ENCODE measurements at regions of chr5 and their contacts with region 1.

Region 1: GRCh38 chr5:147576646-147577535 is 67.0 kb upstream of the DPYSL3 start:
- DNase-seq: no peak
- ATAC-seq: peak; percentile 84
- H3K4me3 ChIP-seq: no peak overlapping the region
- H3K27ac ChIP-seq: no peak overlapping the region
- H3K4me1 ChIP-seq: no peaks in the 10 kb centered on the region
- H3K27me3 ChIP-seq: no peaks in the 10 kb centered on the region
- CTCF ChIP-seq: peak; percentile 70
- EP300 ChIP-seq: no peak
- POLR2A ChIP-seq: no peak
- RAD21 ChIP-seq: no peak

Region 2: GRCh38 chr5:146533260-146533857 is 1043.5 kb before region 1 on chr5:
- CTCF ChIA-PET with region 1: no interaction called
- POLR2A ChIA-PET with region 1: no interaction called
- in situ Hi-C with region 1: no loop called
- intact Hi-C with region 1: loop called (anchors 10 kb)
- DNase-seq: peak; percentile 66
- ATAC-seq: peak; percentile 97
- H3K4me3 ChIP-seq: no peak overlapping the region
- H3K27ac ChIP-seq: no peak overlapping the region
- H3K4me1 ChIP-seq: no peaks in the 10 kb centered on the region
- H3K27me3 ChIP-seq: no peaks in the 10 kb centered on the region
- CTCF ChIP-seq: peak; percentile 89
- EP300 ChIP-seq: no peak
- POLR2A ChIP-seq: no peak
- RAD21 ChIP-seq: no peak

Region 3: GRCh38 chr5:147223948-147224791 is 352.7 kb before region 1 on chr5:
- CTCF ChIA-PET with region 1: no interaction called
- POLR2A ChIA-PET with region 1: no interaction called
- in situ Hi-C with region 1: loop called (anchors 10 kb)
- intact Hi-C with region 1: loop called (anchors 1 kb)
- DNase-seq: peak; percentile 8
- ATAC-seq: peak; percentile 69
- H3K4me3 ChIP-seq: no peak overlapping the region
- H3K27ac ChIP-seq: no peak overlapping the region
- H3K4me1 ChIP-seq: no peaks in the 10 kb centered on the region
- H3K27me3 ChIP-seq: no peaks in the 10 kb centered on the region
- CTCF ChIP-seq: peak; percentile 43
- EP300 ChIP-seq: no peak
- POLR2A ChIP-seq: no peak
- RAD21 ChIP-seq: no peak

Region 4: DNA sequence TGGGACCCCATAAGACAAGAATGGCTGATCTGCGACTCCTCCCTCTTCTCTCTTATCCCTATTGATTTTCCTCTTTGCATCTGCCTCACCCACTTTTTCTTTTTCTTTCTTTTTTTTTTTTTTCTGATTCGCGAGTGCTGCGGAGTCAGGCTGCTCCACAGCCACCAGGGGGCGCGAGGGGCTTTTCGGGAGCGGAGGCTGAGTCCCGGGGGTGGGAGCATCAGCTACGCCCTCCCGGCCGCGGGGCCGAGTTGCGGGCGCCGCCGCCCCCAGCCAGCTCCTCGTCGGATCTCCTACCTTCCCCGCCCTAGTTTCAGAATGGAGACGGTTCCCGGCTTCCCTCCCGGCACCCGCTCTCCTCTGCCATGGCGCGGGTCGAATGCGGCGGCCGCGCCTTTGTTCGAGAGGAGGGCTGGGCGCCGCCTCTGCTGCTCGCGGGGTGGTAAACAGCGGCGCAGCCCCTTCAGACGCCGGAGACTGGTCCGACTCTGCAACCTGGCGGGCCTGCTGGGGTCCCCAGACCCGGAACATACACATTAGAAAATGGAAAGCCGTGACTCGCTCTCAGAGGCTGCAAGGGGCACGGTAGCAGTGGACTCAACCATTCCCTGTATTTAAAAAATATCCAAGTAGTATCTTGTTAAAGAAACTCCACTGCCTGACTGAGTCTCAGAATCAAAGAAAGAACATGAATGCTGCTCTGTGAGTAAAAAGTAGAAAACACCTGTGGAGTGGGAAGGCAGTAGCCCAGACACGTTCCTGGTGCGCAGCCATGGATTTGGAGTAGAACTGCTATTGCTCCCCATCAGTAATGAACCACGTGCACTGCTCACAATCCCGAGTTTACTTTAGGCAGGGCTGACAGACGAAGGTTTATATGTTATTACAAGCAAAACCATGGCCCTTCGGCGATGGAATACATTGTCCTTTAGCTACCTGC is 122.7 kb before region 1 on chr5:
- CTCF ChIA-PET with region 1: interaction called, 9 read pairs
- POLR2A ChIA-PET with region 1: no interaction called
- in situ Hi-C with region 1: loop called (anchors 5 kb)
- intact Hi-C with region 1: loop called (anchors 1 kb)
- DNase-seq: peak; percentile 52
- ATAC-seq: peak; percentile 93
- H3K4me3 ChIP-seq: peak overlapping the region; percentile 56 to 72 (median 61); a peak in 5 of 6 replicates
- H3K27ac ChIP-seq: no peak overlapping the region
- H3K4me1 ChIP-seq: 0 out of 2 replicates have a peak, but pooled peaks cover 4% of the 10 kb centered on the region
- H3K27me3 ChIP-seq: peaks cover 6 to 29% of the 10 kb centered on the region in 2 experiments; a peak in 4 of 5 replicates
- CTCF ChIP-seq: peak; percentile 74
- EP300 ChIP-seq: no peak
- POLR2A ChIP-seq: no peak
- RAD21 ChIP-seq: 0 out of 2 replicates have a peak, but pooled peaks have one; percentile 32

Region 5: GRCh38 chr5:147530530-147531389 is 46.1 kb before region 1 on chr5:
- CTCF ChIA-PET with region 1: no interaction called
- POLR2A ChIA-PET with region 1: no interaction called
- in situ Hi-C with region 1: no loop called
- intact Hi-C with region 1: no loop called
- DNase-seq: no peak
- ATAC-seq: no peak
- H3K4me3 ChIP-seq: no peak overlapping the region
- H3K27ac ChIP-seq: no peak overlapping the region
- H3K4me1 ChIP-seq: no peaks in the 10 kb centered on the region
- H3K27me3 ChIP-seq: peaks cover 0 to 1% of the 10 kb centered on the region in 2 experiments; a peak in 1 of 5 replicates
- CTCF ChIP-seq: no peak
- EP300 ChIP-seq: no peak
- POLR2A ChIP-seq: no peak
- RAD21 ChIP-seq: no peak

Measured in HepG2 (cell line).